OCI-LY7 (cell line): ENCODE measurements at regions of chr2 and their contacts with region 1.

Region 1: GRCh38 chr2:96174251-96175144 is 29.3 kb upstream of the DUSP2 start:
- DNase-seq: peak; percentile 87
- H3K4me3 ChIP-seq: no peak overlapping the region
- H3K27ac ChIP-seq: no peak overlapping the region
- H3K4me1 ChIP-seq: peaks cover 7% of the 10 kb centered on the region
- CTCF ChIP-seq: peak; percentile 99

Region 2: DNA sequence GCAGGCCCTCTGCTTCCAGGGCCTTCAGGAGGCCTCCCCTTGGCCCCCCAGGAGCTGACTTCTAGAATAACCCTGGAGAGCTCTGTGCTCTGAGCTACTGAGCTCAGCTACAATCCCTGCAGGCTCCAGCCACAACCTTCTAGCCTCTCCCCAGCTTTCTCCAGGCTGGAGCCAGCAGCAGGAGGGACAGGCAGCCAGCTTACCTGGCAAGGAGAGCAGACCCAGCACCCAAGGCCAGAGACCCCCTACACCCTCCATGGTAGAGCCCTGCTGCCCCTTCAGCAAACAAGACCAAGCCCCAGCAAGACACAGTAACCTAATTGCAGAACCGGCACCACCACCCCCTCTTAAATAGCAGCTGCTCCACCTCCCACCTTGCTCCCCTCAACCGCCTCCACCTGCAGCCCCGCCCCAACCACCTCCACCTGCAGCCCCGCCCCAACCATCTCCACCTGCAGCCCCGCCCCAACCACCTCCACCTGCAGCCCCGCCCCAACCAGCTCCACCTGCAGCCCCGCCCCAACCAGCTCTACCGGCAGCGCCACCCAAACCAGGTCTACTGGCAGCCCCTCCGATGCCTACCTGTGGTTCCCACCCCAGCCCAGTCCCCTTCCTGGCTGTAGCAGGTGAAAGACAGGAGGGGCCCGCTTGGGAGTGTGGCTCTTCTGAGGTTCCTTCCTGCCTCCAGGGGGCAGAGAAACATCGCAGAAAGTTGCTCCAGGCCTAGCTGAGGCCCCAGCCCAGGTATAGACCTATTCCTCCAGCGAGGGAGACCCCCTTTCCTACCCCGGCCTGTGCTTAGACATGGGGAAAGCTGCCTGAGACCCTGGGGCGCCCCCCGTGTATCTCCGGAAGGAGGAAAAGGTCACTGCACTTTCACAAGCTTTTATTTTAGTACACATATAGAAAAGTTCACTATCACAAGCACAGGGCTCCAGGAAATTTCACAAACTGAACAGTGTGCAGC is 36.0 kb before region 1 on chr2 and contains the start of gene ASTL:
- CTCF ChIA-PET with region 1: interaction called, 26 read pairs
- POLR2A ChIA-PET with region 1: interaction called, 23 read pairs
- intact Hi-C with region 1: loop called (anchors 1 kb)
- DNase-seq: peak; percentile 81
- H3K4me3 ChIP-seq: no peak within 1 kb of the TSS
- H3K27ac ChIP-seq: no peak within 1 kb of the TSS
- H3K4me1 ChIP-seq: peaks cover 24% of the 10 kb centered on the region
- CTCF ChIP-seq: peak; percentile 88
- total RNA-seq, gene ASTL: 0.46 TPM in 1 of 2 replicates, not detected in the other